AG04449 (cell line): ENCODE measurements at regions of chr5 and their contacts with region 1.

Region 1: GRCh38 chr5:59188419-59189225 is 605.7 kb downstream of the RAB3C start:
- DNase-seq: no peak
- H3K4me3 ChIP-seq: no peak overlapping the region
- CTCF ChIP-seq: peak; percentile 39

Region 2: DNA sequence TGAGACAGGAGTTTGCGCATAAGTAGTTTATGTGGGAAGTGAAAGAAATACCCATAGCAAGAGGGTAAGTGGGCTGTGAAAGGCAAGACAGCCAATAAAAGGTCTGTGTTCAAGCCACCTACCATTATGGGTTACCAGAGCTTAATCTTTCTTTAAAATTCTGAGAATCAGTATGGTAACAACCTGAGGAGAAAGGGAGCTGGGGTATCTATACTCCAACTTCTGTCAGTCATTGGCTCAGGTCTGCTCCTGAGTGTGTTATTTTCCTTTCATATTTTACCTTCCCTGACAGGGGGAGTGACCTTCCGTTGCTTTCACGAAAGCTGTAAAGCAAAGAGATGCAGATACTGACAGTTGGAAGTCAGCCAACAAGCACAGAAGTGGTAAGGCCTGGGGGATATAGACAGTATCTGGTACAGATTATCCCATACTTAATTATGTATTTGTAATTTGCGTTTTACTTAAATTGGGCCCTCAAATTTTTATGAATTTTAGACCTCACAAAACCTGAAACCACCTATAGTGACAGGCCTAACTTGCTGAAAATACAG is 372.4 kb before region 1 on chr5:
- CTCF ChIA-PET with region 1: no interaction called
- POLR2A ChIA-PET with region 1: no interaction called
- DNase-seq: no peak
- H3K4me3 ChIP-seq: no peak overlapping the region
- CTCF ChIP-seq: no peak

Region 3: DNA sequence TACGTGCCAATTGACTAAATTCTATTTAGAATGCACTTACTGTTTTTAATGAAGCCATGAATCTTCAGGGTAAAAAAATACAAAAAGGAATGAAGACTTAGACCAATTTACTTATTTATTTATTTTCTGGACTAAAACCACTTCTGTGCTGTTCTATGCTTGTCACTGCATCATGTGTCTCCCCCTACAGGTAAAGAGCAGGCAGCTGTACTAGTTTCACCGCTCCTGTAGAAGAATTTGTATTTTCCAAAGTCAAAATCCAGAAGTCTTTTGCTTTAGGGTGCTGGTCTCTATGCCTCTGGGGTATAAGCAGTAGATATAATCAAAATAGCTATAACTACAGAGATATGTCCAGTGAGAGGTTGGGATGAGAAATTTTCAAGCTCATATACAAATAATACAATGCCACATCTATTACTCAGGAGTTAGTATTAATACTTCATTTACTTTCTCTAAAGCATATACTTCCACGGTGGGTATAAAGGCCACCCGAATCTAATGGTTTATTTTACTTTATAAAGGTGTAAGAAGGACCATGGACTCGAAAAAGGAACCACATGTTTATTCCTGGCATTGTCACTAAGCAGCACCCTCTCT is 14.3 kb before region 1 on chr5:
- CTCF ChIA-PET with region 1: interaction called, 73 read pairs
- POLR2A ChIA-PET with region 1: no interaction called
- DNase-seq: peak; percentile 59
- H3K4me3 ChIP-seq: no peak overlapping the region
- CTCF ChIP-seq: peak; percentile 75

Region 4: DNA sequence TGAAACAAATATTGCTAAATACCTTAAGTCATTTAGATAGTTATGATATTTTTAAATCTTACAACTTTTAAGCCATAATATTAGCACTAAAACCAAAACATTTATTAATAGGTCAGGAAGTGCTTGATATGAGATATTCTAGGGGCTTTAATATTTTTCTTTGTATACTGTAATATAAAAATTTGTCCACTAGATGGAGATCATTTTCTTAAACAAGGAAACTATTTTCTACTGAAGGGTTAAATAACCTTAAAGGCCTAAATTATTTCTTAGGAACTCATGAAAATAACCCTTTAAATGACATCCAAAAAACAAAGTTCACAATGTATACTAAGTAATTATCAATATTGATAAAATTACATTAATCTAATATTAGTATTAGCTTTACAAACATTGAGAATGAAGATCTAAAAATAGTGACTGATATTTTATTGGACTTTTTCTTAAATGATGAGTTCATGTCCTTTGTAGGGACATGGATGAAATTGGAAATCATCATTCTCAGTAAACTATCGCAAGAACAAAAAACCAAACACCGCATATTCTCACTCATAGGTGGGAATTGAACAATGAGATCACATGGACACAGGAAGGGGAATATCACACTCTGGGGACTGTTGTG is 29.9 kb after region 1 on chr5:
- CTCF ChIA-PET with region 1: interaction called, 13 read pairs
- POLR2A ChIA-PET with region 1: no interaction called
- DNase-seq: no peak
- H3K4me3 ChIP-seq: no peak overlapping the region
- CTCF ChIP-seq: no peak

Region 5: GRCh38 chr5:59356813-59357380 is 168.3 kb after region 1 on chr5:
- CTCF ChIA-PET with region 1: interaction called, 367 read pairs
- POLR2A ChIA-PET with region 1: no interaction called
- DNase-seq: no peak
- H3K4me3 ChIP-seq: no peak overlapping the region
- CTCF ChIP-seq: no peak

Region 6: GRCh38 chr5:59390074-59390659 is 201.5 kb after region 1 on chr5:
- CTCF ChIA-PET with region 1: interaction called, 305 read pairs
- POLR2A ChIA-PET with region 1: no interaction called
- DNase-seq: no peak
- H3K4me3 ChIP-seq: no peak overlapping the region
- CTCF ChIP-seq: peak; percentile 26

Region 7: DNA sequence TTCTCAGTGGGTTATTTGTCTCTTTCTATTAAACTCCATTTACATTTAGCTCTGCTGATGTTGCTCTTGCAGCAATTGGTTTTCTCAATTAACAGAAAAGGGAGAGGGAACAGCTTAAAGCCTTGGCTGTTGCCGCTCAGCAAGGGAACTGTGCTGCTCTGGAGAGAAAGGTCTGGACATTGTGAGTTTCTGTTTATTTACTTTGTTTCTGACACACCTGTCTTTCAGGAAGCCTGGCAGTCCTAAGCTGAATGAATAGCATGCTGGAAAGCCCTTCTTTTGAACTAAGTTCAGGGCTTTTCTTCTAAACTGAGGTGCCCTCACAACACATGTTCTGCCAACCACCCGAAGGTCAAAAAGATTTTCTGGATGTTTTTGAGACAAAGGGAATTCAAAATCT is 213.0 kb after region 1 on chr5:
- CTCF ChIA-PET with region 1: no interaction called
- POLR2A ChIA-PET with region 1: no interaction called
- DNase-seq: no peak
- H3K4me3 ChIP-seq: no peak overlapping the region
- CTCF ChIP-seq: no peak

Region 8: GRCh38 chr5:59525959-59526358 is 337.3 kb after region 1 on chr5:
- CTCF ChIA-PET with region 1: no interaction called
- POLR2A ChIA-PET with region 1: no interaction called
- DNase-seq: peak; percentile 57
- H3K4me3 ChIP-seq: no peak overlapping the region
- CTCF ChIP-seq: no peak